OCI-LY7 (cell line): ENCODE measurements at regions of chr4 and their contacts with region 1.

Region 1: GRCh38 chr4:130266814-130267213 is 1170.9 kb downstream of the C4orf33 start:
- DNase-seq: no peak
- H3K4me3 ChIP-seq: no peak overlapping the region
- H3K27ac ChIP-seq: no peak overlapping the region
- H3K4me1 ChIP-seq: no peaks in the 10 kb centered on the region
- CTCF ChIP-seq: no peak

Region 2: GRCh38 chr4:130306566-130306965 is 39.8 kb after region 1 on chr4:
- CTCF ChIA-PET with region 1: no interaction called
- POLR2A ChIA-PET with region 1: no interaction called
- intact Hi-C with region 1: loop called (anchors 2 kb)
- DNase-seq: no peak
- H3K4me3 ChIP-seq: no peak overlapping the region
- H3K27ac ChIP-seq: no peak overlapping the region
- H3K4me1 ChIP-seq: no peaks in the 10 kb centered on the region
- CTCF ChIP-seq: peak; percentile 52